Activated T-helper 2 cell treated with anti-CD3 and anti-CD28 coated beads, Interferon-gamma antibody, Interleukin-2, Interleukin-4, amounts not matched to agents 10 μg/mL and 5 μg/mL and 100 μg/mL, durations not matched to agents 14 hours and 24 hours and 36 hours (primary cell): ENCODE measurements at regions of chr20 and their contacts with region 1.

Region 1: DNA sequence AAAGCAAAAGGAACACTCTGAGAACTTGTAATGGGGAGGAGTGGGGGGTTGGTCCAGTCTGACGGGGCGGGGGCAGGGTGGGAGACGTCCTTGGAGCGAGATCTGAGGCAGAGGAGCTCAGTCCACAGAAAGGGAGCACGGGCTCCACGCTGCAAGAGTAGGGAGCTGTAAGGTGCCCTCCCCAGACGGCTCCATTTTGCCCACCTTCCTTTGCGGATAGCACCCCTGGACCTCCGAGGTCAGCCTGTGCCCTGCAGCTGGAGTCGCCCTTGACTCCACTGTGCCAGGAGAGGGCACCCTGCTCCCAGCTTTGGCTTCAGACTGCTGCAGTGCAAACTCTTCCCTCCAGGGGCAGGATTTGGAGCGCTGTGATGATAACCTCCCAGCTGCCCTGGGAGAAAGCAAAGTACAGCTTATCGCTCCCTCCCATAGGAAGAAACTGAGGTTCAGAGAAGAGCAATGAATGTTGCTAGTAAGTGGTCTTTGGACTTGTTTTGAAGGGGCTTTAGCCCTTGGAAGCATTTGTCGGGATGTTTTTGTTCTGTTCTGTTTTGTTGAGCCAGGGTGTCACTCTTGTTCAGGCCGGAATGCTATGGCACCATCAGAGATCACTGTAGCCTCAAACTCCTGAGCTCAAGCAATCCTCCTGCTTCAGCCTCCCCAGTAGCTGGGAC is 9.5 kb upstream of the AHCY start:
- DNase-seq: peak; percentile 80
- H3K4me3 Mint-ChIP-seq: no peak overlapping the region
- H3K27ac Mint-ChIP-seq: no peak overlapping the region
- H3K4me1 Mint-ChIP-seq: peaks cover 14% of the 10 kb centered on the region
- H3K27me3 Mint-ChIP-seq: peaks cover 28% of the 10 kb centered on the region

Region 2: GRCh38 chr20:34437330-34437986 is 124.8 kb after region 1 on chr20:
- intact Hi-C with region 1: loop called (anchors 10 kb)
- DNase-seq: no peak
- H3K4me3 Mint-ChIP-seq: no peak overlapping the region
- H3K27ac Mint-ChIP-seq: peak overlapping the region; percentile 12
- H3K4me1 Mint-ChIP-seq: peaks cover 13% of the 10 kb centered on the region
- H3K27me3 Mint-ChIP-seq: no peaks in the 10 kb centered on the region

Region 3: GRCh38 chr20:34473262-34473883 is 160.7 kb after region 1 on chr20:
- intact Hi-C with region 1: loop called (anchors 10 kb)
- DNase-seq: no peak
- H3K4me3 Mint-ChIP-seq: no peak overlapping the region
- H3K27ac Mint-ChIP-seq: no peak overlapping the region
- H3K4me1 Mint-ChIP-seq: peaks cover 6% of the 10 kb centered on the region
- H3K27me3 Mint-ChIP-seq: no peaks in the 10 kb centered on the region

Region 4: GRCh38 chr20:34522969-34523871 is 210.5 kb after region 1 on chr20:
- intact Hi-C with region 1: loop called (anchors 1 kb)
- DNase-seq: peak; percentile 31
- H3K4me3 Mint-ChIP-seq: no peak overlapping the region
- H3K27ac Mint-ChIP-seq: no peak overlapping the region
- H3K4me1 Mint-ChIP-seq: peaks cover 12% of the 10 kb centered on the region
- H3K27me3 Mint-ChIP-seq: no peaks in the 10 kb centered on the region

Region 5: GRCh38 chr20:34676642-34677373 is 364.1 kb after region 1 on chr20 and contains the start of gene PIGU:
- intact Hi-C with region 1: loop called (anchors 5 kb)
- DNase-seq: peak; percentile 96
- H3K4me3 Mint-ChIP-seq: peak within 1 kb of the TSS; percentile 93
- H3K27ac Mint-ChIP-seq: peak within 1 kb of the TSS; percentile 96
- H3K4me1 Mint-ChIP-seq: peaks cover 17% of the 10 kb centered on the region
- H3K27me3 Mint-ChIP-seq: no peaks in the 10 kb centered on the region
- total RNA-seq, gene PIGU: 24.9 and 25.7 TPM in 2 replicates

Region 6: GRCh38 chr20:34768096-34768495 is 455.4 kb after region 1 on chr20:
- intact Hi-C with region 1: loop called (anchors 10 kb)
- DNase-seq: no peak
- H3K4me3 Mint-ChIP-seq: no peak overlapping the region
- H3K27ac Mint-ChIP-seq: no peak overlapping the region
- H3K4me1 Mint-ChIP-seq: peaks cover 2% of the 10 kb centered on the region
- H3K27me3 Mint-ChIP-seq: no peaks in the 10 kb centered on the region